Endothelial cell of umbilical vein (primary cell): ENCODE measurements at regions of chr6 and their contacts with region 1.

Region 1: DNA sequence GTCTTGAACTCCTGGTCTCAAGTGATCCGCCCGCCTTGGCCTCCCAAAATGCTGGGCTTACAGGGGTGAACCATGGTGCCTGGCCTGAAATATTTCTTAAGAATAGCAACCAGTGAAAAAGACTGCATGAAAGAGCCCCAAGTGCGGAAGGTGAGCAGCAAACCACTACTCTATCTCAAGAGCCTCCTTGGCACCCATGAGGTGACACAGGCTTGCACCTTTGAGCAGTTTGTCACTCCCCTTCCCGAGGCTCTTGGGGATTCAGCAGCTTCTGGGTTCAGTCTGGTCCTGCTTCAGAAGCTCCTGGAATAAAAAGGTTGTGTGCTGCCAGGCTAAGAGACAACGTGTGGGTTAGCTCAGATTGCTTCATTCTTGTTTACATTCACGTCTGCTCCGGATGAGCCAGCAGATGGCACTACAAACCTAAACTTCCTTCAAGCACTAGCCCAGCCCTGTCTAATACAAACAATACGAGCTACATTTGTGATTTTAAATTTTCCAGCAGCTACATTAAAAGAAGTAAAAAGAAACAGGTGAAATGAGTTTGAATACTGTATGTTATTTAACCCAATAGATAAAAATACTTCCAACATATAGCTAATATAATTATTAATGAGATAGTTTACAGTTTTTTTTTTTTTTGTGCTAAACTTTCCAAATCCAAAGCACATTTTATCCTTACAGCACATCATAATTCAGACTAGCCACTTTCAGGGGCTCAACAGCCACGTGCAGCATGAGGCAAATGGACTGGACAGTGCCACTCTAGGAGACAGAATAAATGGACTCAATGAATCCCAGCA is 46.2 kb downstream of the GJA10 start:
- DNase-seq: peak; percentile 73
- H3K4me3 ChIP-seq: no peak overlapping the region
- H3K27ac ChIP-seq: no peak overlapping the region
- H3K4me1 ChIP-seq: no peaks in the 10 kb centered on the region
- H3K27me3 ChIP-seq: peaks cover 0 to 10% of the 10 kb centered on the region in 2 experiments
- CTCF ChIP-seq: peak; percentile 67
- POLR2A ChIP-seq: no peak

Region 2: DNA sequence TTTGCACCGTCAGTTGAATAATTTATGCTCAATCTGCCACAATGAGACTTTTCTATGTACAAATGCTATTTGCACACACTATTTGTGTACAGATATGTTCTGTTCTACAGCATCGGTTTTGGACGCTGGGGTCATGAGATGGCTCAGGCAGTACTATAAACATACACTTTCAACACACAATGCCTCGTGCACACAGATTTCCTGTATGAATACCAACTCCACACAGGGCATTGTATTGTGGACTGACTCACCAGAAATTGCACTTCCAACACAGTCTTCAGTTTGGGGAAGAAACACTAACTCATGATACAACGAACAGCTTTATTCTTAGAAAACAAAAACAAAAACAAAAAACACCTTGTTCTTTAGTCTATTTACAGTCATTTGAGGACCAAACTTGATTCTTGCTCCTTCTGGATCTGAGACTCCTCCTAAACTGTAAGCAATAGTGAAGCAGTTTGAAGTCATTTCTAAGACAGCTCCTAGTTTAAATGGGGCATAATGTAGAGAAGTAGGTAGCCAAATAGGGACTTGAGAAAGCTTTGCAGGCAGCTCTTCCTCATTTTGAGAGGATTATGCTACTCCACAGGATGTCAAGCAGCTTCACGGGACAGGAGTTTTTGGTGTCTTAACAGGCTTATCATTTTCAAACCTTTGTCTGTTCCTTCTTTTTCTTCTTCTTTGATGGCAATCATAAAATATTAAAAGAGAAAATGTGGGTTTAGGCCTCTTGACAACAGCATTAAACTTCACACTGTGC is 12.5 kb before region 1 on chr6:
- CTCF ChIA-PET with region 1: interaction called, 19 read pairs
- POLR2A ChIA-PET with region 1: no interaction called
- dilution Hi-C with region 1: no loop called
- intact Hi-C with region 1: no loop called
- DNase-seq: peak; percentile 84
- H3K4me3 ChIP-seq: no peak overlapping the region
- H3K27ac ChIP-seq: peak overlapping the region; percentile 61
- H3K4me1 ChIP-seq: peaks cover 14% of the 10 kb centered on the region
- H3K27me3 ChIP-seq: no peaks in the 10 kb centered on the region
- CTCF ChIP-seq: no peak
- POLR2A ChIP-seq: no peak

Region 3: GRCh38 chr6:89984926-89985750 is 44.7 kb after region 1 on chr6:
- CTCF ChIA-PET with region 1: interaction called, 10 read pairs
- POLR2A ChIA-PET with region 1: no interaction called
- dilution Hi-C with region 1: no loop called
- intact Hi-C with region 1: no loop called
- DNase-seq: no peak
- H3K4me3 ChIP-seq: no peak overlapping the region
- H3K27ac ChIP-seq: no peak overlapping the region
- H3K4me1 ChIP-seq: no peaks in the 10 kb centered on the region
- H3K27me3 ChIP-seq: peaks cover 0 to 1% of the 10 kb centered on the region in 2 experiments
- CTCF ChIP-seq: no peak
- POLR2A ChIP-seq: no peak

Region 4: GRCh38 chr6:90035047-90035723 is 94.8 kb after region 1 on chr6:
- CTCF ChIA-PET with region 1: no interaction called
- POLR2A ChIA-PET with region 1: no interaction called
- dilution Hi-C with region 1: no loop called
- intact Hi-C with region 1: no loop called
- DNase-seq: no peak
- H3K4me3 ChIP-seq: no peak overlapping the region
- H3K27ac ChIP-seq: no peak overlapping the region
- H3K4me1 ChIP-seq: no peaks in the 10 kb centered on the region
- H3K27me3 ChIP-seq: no peaks in the 10 kb centered on the region
- CTCF ChIP-seq: no peak
- POLR2A ChIP-seq: no peak

Region 5: GRCh38 chr6:90216072-90216977 is 275.9 kb after region 1 on chr6:
- CTCF ChIA-PET with region 1: interaction called, 12 read pairs
- POLR2A ChIA-PET with region 1: no interaction called
- dilution Hi-C with region 1: no loop called
- intact Hi-C with region 1: no loop called
- DNase-seq: peak; percentile 60
- H3K4me3 ChIP-seq: no peak overlapping the region
- H3K27ac ChIP-seq: peak overlapping the region; percentile 10
- H3K4me1 ChIP-seq: peaks cover 48% of the 10 kb centered on the region
- H3K27me3 ChIP-seq: no peaks in the 10 kb centered on the region
- CTCF ChIP-seq: no peak
- POLR2A ChIP-seq: no peak

Region 6: GRCh38 chr6:90393232-90393884 is 452.9 kb after region 1 on chr6:
- CTCF ChIA-PET with region 1: interaction called, 84 read pairs
- POLR2A ChIA-PET with region 1: no interaction called
- dilution Hi-C with region 1: no loop called
- intact Hi-C with region 1: loop called (anchors 1 kb)
- DNase-seq: peak; percentile 65
- H3K4me3 ChIP-seq: no peak overlapping the region
- H3K27ac ChIP-seq: no peak overlapping the region
- H3K4me1 ChIP-seq: peaks cover 5% of the 10 kb centered on the region
- H3K27me3 ChIP-seq: peaks cover 7 to 17% of the 10 kb centered on the region in 2 experiments
- CTCF ChIP-seq: peak; percentile 67 to 69
- POLR2A ChIP-seq: no peak

Region 7: GRCh38 chr6:90478789-90479602 is 538.6 kb after region 1 on chr6:
- CTCF ChIA-PET with region 1: interaction called, 269 read pairs
- POLR2A ChIA-PET with region 1: interaction called, 3 read pairs
- dilution Hi-C with region 1: no loop called
- intact Hi-C with region 1: loop called (anchors 1 kb)
- DNase-seq: peak; percentile 89
- H3K4me3 ChIP-seq: no peak overlapping the region
- H3K27ac ChIP-seq: no peak overlapping the region
- H3K4me1 ChIP-seq: peaks cover 9% of the 10 kb centered on the region
- H3K27me3 ChIP-seq: peaks cover 0 to 3% of the 10 kb centered on the region in 2 experiments
- CTCF ChIP-seq: peak; percentile 75 to 81
- POLR2A ChIP-seq: no peak

Region 8: DNA sequence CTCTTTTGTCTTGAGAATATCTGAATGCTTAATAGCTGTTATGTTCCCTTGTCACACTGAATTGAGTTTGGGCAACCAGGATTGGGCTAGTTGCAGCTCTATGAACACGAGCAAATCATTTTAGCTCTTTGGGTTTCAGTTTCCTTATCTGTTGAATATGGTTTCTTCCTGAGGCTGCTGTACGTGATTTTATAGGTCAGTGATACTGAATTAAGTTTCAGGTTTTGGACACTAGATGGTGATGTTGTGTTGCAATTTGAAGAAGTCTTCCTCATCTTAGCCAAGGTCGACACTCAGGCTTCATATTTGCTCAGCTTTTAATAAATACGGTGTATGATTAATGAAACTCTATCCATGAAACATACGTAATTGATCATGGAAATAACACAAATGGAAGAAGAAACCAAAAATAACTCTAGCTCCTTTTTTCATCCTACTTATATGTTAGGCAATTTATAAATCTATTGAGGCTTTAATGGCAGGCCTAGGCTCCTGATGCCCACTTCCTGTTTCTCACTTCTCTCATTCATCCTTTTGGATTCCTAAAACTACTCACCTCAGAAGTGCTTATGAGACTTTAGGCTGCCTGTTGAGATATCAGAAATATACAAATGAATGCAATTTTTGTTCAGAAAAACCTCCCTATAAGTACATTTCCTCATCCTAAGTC is 1000.5 kb after region 1 on chr6:
- CTCF ChIA-PET with region 1: no interaction called
- POLR2A ChIA-PET with region 1: no interaction called
- dilution Hi-C with region 1: no loop called
- intact Hi-C with region 1: loop called (anchors 2 kb)
- DNase-seq: peak; percentile 75
- H3K4me3 ChIP-seq: no peak overlapping the region
- H3K27ac ChIP-seq: no peak overlapping the region
- H3K4me1 ChIP-seq: no peaks in the 10 kb centered on the region
- H3K27me3 ChIP-seq: peaks cover 0 to 2% of the 10 kb centered on the region in 2 experiments
- CTCF ChIP-seq: peak; percentile 25 to 35
- POLR2A ChIP-seq: no peak